SK-N-SH (cell line): ENCODE measurements at regions of chr16 and their contacts with region 1.

Region 1: GRCh38 chr16:46908540-46909372 is 24.6 kb downstream of the GPT2 start:
- DNase-seq: peak; percentile 84
- H3K4me3 ChIP-seq: no peak overlapping the region
- H3K27ac ChIP-seq: no peak overlapping the region
- H3K4me1 ChIP-seq: no peaks in the 10 kb centered on the region; a peak in 1 of 4 replicates
- H3K27me3 ChIP-seq: no peaks in the 10 kb centered on the region
- CTCF ChIP-seq: peak; percentile 66
- EP300 ChIP-seq: no peak
- RAD21 ChIP-seq: peak; percentile 71

Region 2: GRCh38 chr16:46673320-46674013 is 235.3 kb before region 1 on chr16:
- CTCF ChIA-PET with region 1: interaction called, 20 read pairs
- POLR2A ChIA-PET with region 1: no interaction called
- DNase-seq: peak; percentile 75
- H3K4me3 ChIP-seq: peak overlapping the region in 1 of 2 experiments; percentile 27; a peak in 1 of 4 replicates
- H3K27ac ChIP-seq: no peak overlapping the region
- H3K4me1 ChIP-seq: no peaks in the 10 kb centered on the region
- H3K27me3 ChIP-seq: no peaks in the 10 kb centered on the region
- CTCF ChIP-seq: peak; percentile 98
- EP300 ChIP-seq: no peak
- RAD21 ChIP-seq: peak; percentile 94

Region 3: DNA sequence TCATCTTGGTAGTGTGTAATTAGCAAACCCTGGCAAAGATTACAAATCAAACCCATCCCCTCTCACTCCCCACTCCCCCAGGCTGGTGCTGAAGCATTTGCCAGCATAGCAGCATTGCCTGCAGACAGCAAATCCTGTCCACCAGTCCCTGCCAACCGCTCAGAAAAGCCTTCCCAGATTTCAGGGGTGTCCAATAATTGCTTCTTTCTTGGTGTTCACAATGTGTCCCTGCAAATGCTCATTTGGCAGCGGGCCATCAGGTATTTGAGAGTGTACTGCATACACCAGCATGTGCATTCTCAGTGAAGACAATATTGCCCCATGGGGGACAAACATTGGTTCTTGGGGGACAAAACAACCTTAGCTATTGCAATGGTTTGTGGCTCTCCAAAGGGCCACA is 191.1 kb before region 1 on chr16:
- CTCF ChIA-PET with region 1: no interaction called
- POLR2A ChIA-PET with region 1: no interaction called
- DNase-seq: no peak
- H3K4me3 ChIP-seq: no peak overlapping the region
- H3K27ac ChIP-seq: no peak overlapping the region
- H3K4me1 ChIP-seq: peaks cover 0 to 2% of the 10 kb centered on the region in 2 experiments; a peak in 1 of 4 replicates
- H3K27me3 ChIP-seq: no peaks in the 10 kb centered on the region
- CTCF ChIP-seq: no peak
- EP300 ChIP-seq: no peak
- RAD21 ChIP-seq: no peak

Region 4: DNA sequence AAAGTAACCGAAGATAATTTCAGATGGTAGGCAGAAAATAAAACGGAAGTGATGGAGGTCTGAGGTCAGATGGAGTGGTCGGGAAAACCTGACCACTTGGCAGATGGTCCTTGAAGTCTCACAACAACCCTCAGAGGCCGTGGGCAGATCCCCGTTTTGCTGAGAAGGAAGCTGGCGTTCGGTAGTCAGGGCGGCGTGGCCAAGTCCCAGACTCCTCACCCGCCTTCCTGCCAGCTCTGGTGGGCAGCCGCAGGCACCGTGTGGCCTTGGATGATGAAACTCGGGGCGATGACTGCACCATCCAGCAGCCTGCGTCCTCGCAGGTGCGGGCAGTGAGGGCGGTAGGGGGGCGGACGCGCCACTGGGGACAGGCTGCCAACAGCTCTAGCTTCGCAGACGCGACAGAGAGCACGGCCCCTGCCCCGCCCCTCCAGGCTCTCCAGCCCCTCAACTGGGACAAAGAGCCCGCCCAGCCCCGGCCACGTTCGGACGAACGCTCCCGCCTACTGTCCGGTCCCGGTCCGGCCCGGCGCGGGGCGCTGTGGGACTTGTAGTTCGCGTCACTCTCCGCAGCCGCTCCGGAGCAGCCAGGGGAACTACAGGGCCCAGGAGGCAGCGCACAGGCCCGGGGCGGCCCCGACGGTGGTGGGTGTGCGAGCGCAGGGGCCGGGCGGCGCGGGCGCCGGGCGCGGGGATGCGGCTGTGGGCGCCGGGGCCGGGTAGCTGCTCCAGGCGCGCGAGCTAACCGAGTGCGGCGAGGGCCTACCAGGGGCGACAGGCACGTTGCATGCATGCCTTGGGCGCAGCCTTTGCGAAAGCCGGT is 24.9 kb before region 1 on chr16 and contains the start of gene GPT2:
- CTCF ChIA-PET with region 1: interaction called, 20 read pairs
- POLR2A ChIA-PET with region 1: no interaction called
- DNase-seq: peak; percentile 94
- H3K4me3 ChIP-seq: peak within 1 kb of the TSS; percentile 84 to 88
- H3K27ac ChIP-seq: peak within 1 kb of the TSS; percentile 58 to 90; a peak in 3 of 4 replicates
- H3K4me1 ChIP-seq: peaks cover 11 to 25% of the 10 kb centered on the region in 2 experiments; a peak in 2 of 4 replicates
- H3K27me3 ChIP-seq: no peaks in the 10 kb centered on the region
- CTCF ChIP-seq: no peak
- EP300 ChIP-seq: no peak; a peak in 1 of 4 replicates
- RAD21 ChIP-seq: no peak
- polyA plus RNA-seq, gene GPT2: 19.9 and 21.9 TPM in 2 replicates

Region 5: GRCh38 chr16:46889942-46890300 is 18.8 kb before region 1 on chr16:
- CTCF ChIA-PET with region 1: interaction called, 20 read pairs
- POLR2A ChIA-PET with region 1: no interaction called
- DNase-seq: no peak
- H3K4me3 ChIP-seq: no peak overlapping the region
- H3K27ac ChIP-seq: no peak overlapping the region; a peak in 1 of 4 replicates
- H3K4me1 ChIP-seq: peaks cover 11 to 33% of the 10 kb centered on the region in 2 experiments; a peak in 2 of 4 replicates
- H3K27me3 ChIP-seq: no peaks in the 10 kb centered on the region
- CTCF ChIP-seq: no peak
- EP300 ChIP-seq: no peak
- RAD21 ChIP-seq: no peak

Region 6: DNA sequence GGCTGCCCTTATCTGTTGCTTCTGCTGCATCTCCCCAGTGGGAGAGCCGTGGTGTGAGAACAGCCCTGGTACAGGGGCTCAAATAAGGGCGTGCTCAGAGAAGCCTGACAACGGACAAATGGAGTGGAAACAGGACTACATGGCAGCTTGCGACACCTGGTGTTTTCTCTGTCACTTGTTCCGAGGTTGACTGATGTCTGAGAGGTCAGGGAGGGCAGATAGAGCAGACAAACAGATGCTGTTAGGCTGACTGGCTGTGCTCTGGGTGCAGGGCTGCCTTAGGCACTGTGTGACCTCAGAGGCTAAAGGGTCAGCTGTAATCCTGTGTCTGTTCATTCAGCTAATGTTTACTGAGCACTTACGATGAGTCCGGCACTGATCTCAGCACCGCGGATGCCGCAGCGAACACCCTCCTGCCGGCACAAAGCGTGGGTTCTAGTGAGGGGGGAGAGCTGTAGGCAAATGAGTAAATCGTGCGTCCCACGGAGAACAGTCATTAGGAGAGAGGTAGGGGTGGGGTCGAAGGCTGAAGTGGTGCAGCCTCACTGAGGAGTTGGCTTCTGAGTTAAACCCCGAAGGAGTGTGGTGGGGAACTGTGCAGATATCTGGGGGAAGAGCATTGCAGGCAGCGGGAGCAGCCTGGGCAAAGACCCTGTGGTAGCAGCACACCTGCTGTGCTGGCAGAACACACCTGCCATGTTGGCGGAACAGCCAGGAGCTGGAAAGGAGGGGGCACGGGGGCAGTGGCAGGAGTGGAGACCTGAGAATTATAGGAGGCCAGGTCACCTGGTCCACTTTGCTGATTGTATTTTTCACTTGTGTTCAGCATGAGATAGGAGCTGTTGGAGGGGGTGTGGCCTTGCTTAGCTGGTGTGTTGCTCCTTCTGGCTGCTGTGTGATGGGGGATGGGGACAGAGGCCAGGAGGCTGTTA is 10.4 kb after region 1 on chr16:
- CTCF ChIA-PET with region 1: interaction called, 15 read pairs
- POLR2A ChIA-PET with region 1: no interaction called
- DNase-seq: no peak
- H3K4me3 ChIP-seq: no peak overlapping the region
- H3K27ac ChIP-seq: no peak overlapping the region
- H3K4me1 ChIP-seq: no peaks in the 10 kb centered on the region; a peak in 1 of 4 replicates
- H3K27me3 ChIP-seq: no peaks in the 10 kb centered on the region
- CTCF ChIP-seq: no peak
- EP300 ChIP-seq: no peak
- RAD21 ChIP-seq: no peak

Region 7: GRCh38 chr16:46929378-46930332 is 20.9 kb after region 1 on chr16:
- CTCF ChIA-PET with region 1: interaction called, 15 read pairs
- POLR2A ChIA-PET with region 1: no interaction called
- DNase-seq: peak; percentile 92
- H3K4me3 ChIP-seq: no peak overlapping the region; a peak in 1 of 4 replicates
- H3K27ac ChIP-seq: no peak overlapping the region
- H3K4me1 ChIP-seq: no peaks in the 10 kb centered on the region
- H3K27me3 ChIP-seq: no peaks in the 10 kb centered on the region
- CTCF ChIP-seq: peak; percentile 91
- EP300 ChIP-seq: no peak
- RAD21 ChIP-seq: peak; percentile 65

Region 8: DNA sequence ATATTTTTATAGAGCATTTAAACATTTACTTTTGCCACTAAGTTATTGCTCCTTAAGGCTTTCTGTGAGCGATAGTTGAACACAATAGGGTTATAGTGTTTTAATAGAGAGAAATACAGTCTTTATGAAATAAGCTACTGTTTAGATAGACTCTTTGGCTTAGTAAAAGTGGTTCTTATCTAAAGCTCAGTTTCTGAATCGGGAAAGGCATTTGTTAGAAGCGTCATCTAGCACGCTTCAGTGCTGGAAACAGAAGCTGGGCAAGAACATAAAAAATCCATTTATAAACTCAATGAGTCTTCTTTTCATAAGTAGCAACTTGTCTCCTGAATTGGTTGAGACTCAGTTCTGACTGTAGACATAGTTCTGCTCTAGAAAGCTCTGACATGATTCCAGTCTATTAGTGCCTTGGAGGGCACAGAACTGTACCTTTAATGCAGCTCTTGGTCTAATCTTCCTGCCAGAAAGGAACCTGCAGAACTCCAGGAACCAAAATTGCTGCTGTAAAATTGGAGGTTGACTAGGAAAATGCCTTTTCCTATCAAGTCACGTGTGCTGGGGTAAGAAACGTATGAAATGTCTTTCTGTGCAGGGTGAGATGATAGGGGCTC is 120.1 kb after region 1 on chr16:
- CTCF ChIA-PET with region 1: no interaction called
- POLR2A ChIA-PET with region 1: no interaction called
- DNase-seq: no peak
- H3K4me3 ChIP-seq: no peak overlapping the region
- H3K27ac ChIP-seq: no peak overlapping the region
- H3K4me1 ChIP-seq: no peaks in the 10 kb centered on the region
- H3K27me3 ChIP-seq: no peaks in the 10 kb centered on the region
- CTCF ChIP-seq: no peak
- EP300 ChIP-seq: no peak
- RAD21 ChIP-seq: no peak